Common myeloid progenitor, CD34-positive (primary cell): ENCODE measurements at regions of chr5 and their contacts with region 1.

Region 1: GRCh38 chr5:55691265-55692105 is 20.6 kb downstream of the SLC38A9 start:
- DNase-seq: peak; percentile 48 to 69 (median 56)
- H3K4me3 ChIP-seq: no peak overlapping the region
- H3K27ac ChIP-seq: no peak overlapping the region
- H3K4me1 ChIP-seq: peaks cover 0 to 3% (median 0%) of the 10 kb centered on the region in 4 experiments
- H3K27me3 ChIP-seq: no peaks in the 10 kb centered on the region

Region 2: GRCh38 chr5:55407059-55407684 is 284.3 kb before region 1 on chr5:
- CTCF ChIA-PET with region 1: interaction called, 16 read pairs
- POLR2A ChIA-PET with region 1: no interaction called
- DNase-seq: peak; percentile 39 to 61 (median 53)
- H3K4me3 ChIP-seq: no peak overlapping the region
- H3K27ac ChIP-seq: no peak overlapping the region
- H3K4me1 ChIP-seq: peaks cover 0 to 12% (median 2%) of the 10 kb centered on the region in 4 experiments
- H3K27me3 ChIP-seq: no peaks in the 10 kb centered on the region